ENCODE measurements at regions of chr10 and their contacts with region 1.

Region 1: GRCh38 chr10:110803830-110804338 is 67.8 kb upstream of the PDCD4 start:
- DNase-seq: no peak
- H3K4me3 ChIP-seq: no peak overlapping the region
- H3K27ac ChIP-seq: peak overlapping the region; percentile 16 to 80 (median 70)
- H3K4me1 ChIP-seq: peaks cover 0 to 39% (median 38%) of the 10 kb centered on the region in 4 donors
- H3K27me3 ChIP-seq: no peaks in the 10 kb centered on the region
- CTCF ChIP-seq: peak; percentile 42 to 67 (median 50)
- EP300 ChIP-seq: no peak
- POLR2A ChIP-seq: no peak

Region 2: GRCh38 chr10:110746254-110746826 is 57.5 kb before region 1 on chr10:
- intact Hi-C with region 1: loop called (anchors 5 kb)
- DNase-seq: peak; percentile 75
- H3K4me3 ChIP-seq: no peak overlapping the region
- H3K27ac ChIP-seq: peak overlapping the region in 2 of 4 donors; percentile 8 to 23
- H3K4me1 ChIP-seq: peaks cover 0 to 25% (median 3%) of the 10 kb centered on the region in 4 donors
- H3K27me3 ChIP-seq: no peaks in the 10 kb centered on the region
- CTCF ChIP-seq: peak; percentile 58 to 84 (median 80)
- EP300 ChIP-seq: no peak
- POLR2A ChIP-seq: no peak

Region 3: GRCh38 chr10:110843031-110843430 is 39.1 kb after region 1 on chr10:
- intact Hi-C with region 1: no loop called
- DNase-seq: peak; percentile 61
- H3K4me3 ChIP-seq: no peak overlapping the region
- H3K27ac ChIP-seq: peak overlapping the region in 1 of 4 donors; percentile 22
- H3K4me1 ChIP-seq: peaks cover 0 to 14% (median 12%) of the 10 kb centered on the region in 4 donors
- H3K27me3 ChIP-seq: no peaks in the 10 kb centered on the region
- CTCF ChIP-seq: no peak
- EP300 ChIP-seq: no peak
- POLR2A ChIP-seq: no peak

Region 4: GRCh38 chr10:110893559-110894179 is 89.8 kb after region 1 on chr10:
- intact Hi-C with region 1: loop called (anchors 2 kb)
- DNase-seq: no peak
- H3K4me3 ChIP-seq: no peak overlapping the region
- H3K27ac ChIP-seq: peak overlapping the region in 2 of 4 donors; percentile 48 to 50
- H3K4me1 ChIP-seq: peaks cover 0 to 51% (median 39%) of the 10 kb centered on the region in 4 donors
- H3K27me3 ChIP-seq: no peaks in the 10 kb centered on the region
- CTCF ChIP-seq: peak; percentile 18 to 58 (median 46)
- EP300 ChIP-seq: no peak
- POLR2A ChIP-seq: no peak

Region 5: GRCh38 chr10:111030042-111030750 is 226.3 kb after region 1 on chr10:
- intact Hi-C with region 1: no loop called
- DNase-seq: no peak
- H3K4me3 ChIP-seq: no peak overlapping the region
- H3K27ac ChIP-seq: no peak overlapping the region
- H3K4me1 ChIP-seq: no peaks in the 10 kb centered on the region
- H3K27me3 ChIP-seq: no peaks in the 10 kb centered on the region
- CTCF ChIP-seq: no peak
- EP300 ChIP-seq: no peak
- POLR2A ChIP-seq: no peak

Measured in sigmoid colon (tissue), 7 donors.